Posterior vena cava (tissue), 2 donors: ENCODE measurements at regions of chr13 and their contacts with region 1.

Region 1: DNA sequence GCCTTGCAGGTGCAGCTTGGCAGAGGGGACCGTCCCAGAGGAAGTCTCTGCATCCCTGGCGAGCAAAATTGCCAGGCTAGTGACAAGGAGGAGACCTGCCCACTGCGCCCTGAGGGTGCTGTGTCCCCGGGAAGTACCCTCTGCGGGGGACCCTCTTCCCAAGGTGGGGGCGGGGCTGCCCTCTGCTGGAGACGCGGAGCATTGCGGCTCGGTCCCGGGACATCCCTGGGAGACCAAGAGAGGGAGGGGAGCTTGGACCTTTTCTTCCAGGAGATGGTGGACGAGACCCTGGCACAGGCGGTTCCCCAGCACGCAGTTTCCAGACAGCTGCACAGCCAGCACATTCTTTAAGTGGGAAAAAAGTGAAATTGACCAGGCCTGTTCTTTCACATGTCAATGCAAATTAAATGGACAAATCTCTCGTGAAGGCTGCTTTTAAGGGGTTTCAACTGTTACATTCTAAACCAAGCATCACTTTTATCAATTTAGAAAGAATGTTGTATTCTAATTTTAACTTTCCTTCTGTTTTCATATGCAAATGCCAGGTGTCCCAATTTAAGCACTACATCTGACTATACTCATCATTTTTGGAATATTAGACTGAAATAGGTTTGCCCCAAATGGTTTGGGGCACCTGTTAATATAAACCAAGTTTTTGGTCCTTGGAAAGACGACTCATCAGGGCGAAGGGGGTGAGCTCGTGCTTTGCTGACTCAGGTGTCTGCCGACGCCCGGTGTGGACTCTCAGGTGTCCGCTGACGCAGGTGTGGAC is 60.7 kb downstream of the MCF2L start:
- DNase-seq: no peak

Region 2: DNA sequence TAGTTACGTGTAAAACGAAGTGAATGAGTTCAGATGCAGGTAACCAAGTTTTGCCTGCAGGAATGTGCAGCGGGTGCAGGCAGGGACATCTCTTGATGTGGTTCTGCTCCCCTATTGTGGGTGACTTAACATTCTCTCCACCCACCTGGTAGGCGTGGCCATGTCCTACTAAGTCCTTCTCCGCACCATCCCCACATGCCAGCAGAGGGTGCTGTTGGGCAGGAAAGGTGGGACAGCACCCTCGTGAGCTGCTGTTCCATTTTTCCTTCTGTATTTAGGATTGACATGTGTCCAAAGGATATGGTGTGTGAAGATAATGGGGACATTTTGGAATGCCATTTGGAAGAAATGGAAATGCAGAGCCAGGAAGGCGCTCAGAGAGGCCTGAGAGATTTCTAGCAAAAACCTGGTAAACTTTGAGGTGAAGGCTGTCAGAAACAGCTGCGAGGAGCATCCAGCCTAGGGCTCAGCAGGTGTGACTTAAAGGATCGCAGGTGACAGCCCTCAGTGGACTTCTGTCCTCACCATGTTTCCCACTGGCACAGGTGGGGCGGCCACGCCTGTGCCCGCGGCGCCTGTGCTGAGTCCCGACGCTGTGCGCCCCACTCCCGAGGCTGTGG is 86.9 kb before region 1 on chr13:
- intact Hi-C with region 1: loop called in 1 of 2 experiments (anchors 10 kb)
- DNase-seq: peak; percentile 98

Region 3: DNA sequence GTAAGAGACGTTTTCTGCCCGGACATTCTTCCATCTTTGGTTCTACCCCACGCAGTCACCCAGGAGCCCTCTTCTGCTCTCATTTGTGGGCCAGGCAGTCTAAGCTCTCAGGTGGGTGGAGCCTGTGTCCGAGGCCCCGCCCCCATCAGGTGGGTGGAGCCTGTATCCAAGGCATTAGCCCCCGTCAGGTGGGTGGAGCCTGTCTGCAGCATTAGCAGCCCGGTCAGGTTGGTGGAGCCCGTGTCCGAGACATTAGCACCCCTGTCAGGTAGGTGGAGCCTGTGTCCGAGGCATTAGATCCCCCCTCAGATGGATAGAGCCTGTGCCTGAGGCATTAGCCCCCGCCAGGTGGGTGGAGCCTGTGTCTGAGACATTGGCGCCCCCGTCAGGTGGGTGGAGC is 989.7 kb after region 1 on chr13:
- intact Hi-C with region 1: no loop called
- DNase-seq: no peak